Colonic mucosa (tissue), 4 donors: ENCODE measurements at regions of chr12 and their contacts with region 1.

Region 1: GRCh38 chr12:124036674-124037109 is 63.7 kb downstream of the ZNF664 start:
- DNase-seq: peak; percentile 32
- H3K4me3 ChIP-seq: no peak overlapping the region
- H3K27ac ChIP-seq: no peak overlapping the region
- H3K4me1 ChIP-seq: no peaks in the 10 kb centered on the region
- H3K27me3 ChIP-seq: no peaks in the 10 kb centered on the region
- CTCF ChIP-seq: peak; percentile 95

Region 2: GRCh38 chr12:123801573-123802178 is 235.0 kb before region 1 on chr12:
- intact Hi-C with region 1: loop called (anchors 10 kb)
- DNase-seq: no peak
- H3K4me3 ChIP-seq: no peak overlapping the region
- H3K27ac ChIP-seq: no peak overlapping the region
- H3K4me1 ChIP-seq: no peaks in the 10 kb centered on the region
- H3K27me3 ChIP-seq: no peaks in the 10 kb centered on the region
- CTCF ChIP-seq: peak; percentile 14